ENCODE measurements at regions of chr17 and their contacts with region 1.

Region 1: GRCh38 chr17:48541577-48542113 is 3.3 kb downstream of the HOXB2 start:
- DNase-seq: no peak
- H3K4me3 ChIP-seq: peak overlapping the region; percentile 87
- H3K27ac ChIP-seq: peak overlapping the region; percentile 96
- H3K27me3 ChIP-seq: no peaks in the 10 kb centered on the region
- CTCF ChIP-seq: no peak

Region 2: GRCh38 chr17:47698749-47699535 is 842.7 kb before region 1 on chr17:
- CTCF ChIA-PET with region 1: no interaction called
- POLR2A ChIA-PET with region 1: no interaction called
- DNase-seq: no peak
- H3K4me3 ChIP-seq: no peak overlapping the region
- H3K27ac ChIP-seq: no peak overlapping the region
- H3K27me3 ChIP-seq: no peaks in the 10 kb centered on the region
- CTCF ChIP-seq: peak; percentile 88

Region 3: GRCh38 chr17:48503748-48504147 is 37.9 kb before region 1 on chr17:
- CTCF ChIA-PET with region 1: no interaction called
- POLR2A ChIA-PET with region 1: interaction called, 14 read pairs
- DNase-seq: peak; percentile 89
- H3K4me3 ChIP-seq: no peak overlapping the region
- H3K27ac ChIP-seq: peak overlapping the region; percentile 41
- H3K27me3 ChIP-seq: no peaks in the 10 kb centered on the region
- CTCF ChIP-seq: no peak

Region 4: GRCh38 chr17:48522031-48522653 is 19.5 kb before region 1 on chr17:
- CTCF ChIA-PET with region 1: interaction called, 12 read pairs
- POLR2A ChIA-PET with region 1: interaction called, 4 read pairs
- DNase-seq: no peak
- H3K4me3 ChIP-seq: no peak overlapping the region
- H3K27ac ChIP-seq: no peak overlapping the region
- H3K27me3 ChIP-seq: peaks cover 2% of the 10 kb centered on the region
- CTCF ChIP-seq: no peak

Region 5: GRCh38 chr17:48636177-48637018 is 94.8 kb after region 1 on chr17:
- CTCF ChIA-PET with region 1: no interaction called
- POLR2A ChIA-PET with region 1: no interaction called
- DNase-seq: no peak
- H3K4me3 ChIP-seq: no peak overlapping the region
- H3K27ac ChIP-seq: no peak overlapping the region
- H3K27me3 ChIP-seq: peaks cover 97% of the 10 kb centered on the region
- CTCF ChIP-seq: peak; percentile 57

Measured in AG04450 (cell line).